ENCODE measurements at regions of chr22 and their contacts with region 1.

Region 1: DNA sequence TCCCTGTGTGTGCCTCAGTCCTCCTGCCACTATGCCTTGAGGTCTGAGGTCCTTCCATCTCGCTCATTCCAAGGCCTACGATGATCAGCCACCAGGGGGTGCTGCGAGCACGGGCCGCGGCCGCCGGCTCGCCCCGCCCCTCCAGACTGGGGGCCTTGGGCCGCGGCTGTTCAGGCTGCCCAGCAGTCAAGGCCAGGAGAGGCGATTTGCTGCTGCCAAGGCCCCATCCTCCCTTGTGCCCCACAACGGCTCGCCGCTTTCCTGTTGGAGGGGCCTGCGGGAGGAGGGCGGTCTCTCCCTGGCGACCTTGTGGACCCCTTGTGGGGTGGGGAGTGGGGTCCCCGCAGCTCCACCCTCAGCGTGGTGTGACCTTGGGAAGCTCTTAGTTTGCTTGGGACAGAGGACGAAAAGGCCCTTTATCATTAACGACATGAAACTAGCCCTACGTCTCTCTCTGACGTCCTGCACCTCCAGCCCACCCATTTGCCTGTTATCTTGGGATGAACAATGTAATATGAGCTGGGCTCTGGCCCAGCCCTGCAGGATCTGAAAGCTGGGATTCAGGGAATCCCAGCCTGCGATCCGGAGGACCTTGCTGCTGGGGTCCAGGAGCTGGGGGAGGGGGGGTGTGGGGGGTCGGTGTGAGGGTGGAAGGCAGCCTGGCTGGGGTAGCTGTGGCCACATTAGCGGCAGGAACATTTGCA is 5.3 kb upstream of the GALR3 start:
- DNase-seq: peak; percentile 86
- ATAC-seq: peak; percentile 70
- H3K4me3 ChIP-seq: peak overlapping the region; percentile 29 to 63 (median 35); a peak in 4 of 6 replicates
- H3K27ac ChIP-seq: peak overlapping the region; percentile 72
- H3K4me1 ChIP-seq: peaks cover 50% of the 10 kb centered on the region
- H3K27me3 ChIP-seq: no peaks in the 10 kb centered on the region
- CTCF ChIP-seq: peak; percentile 100
- EP300 ChIP-seq: peak in 1 of 2 experiments; percentile 23; a peak in 1 of 4 replicates
- POLR2A ChIP-seq: peak in 1 of 2 experiments; percentile 63; a peak in 1 of 4 replicates
- RAD21 ChIP-seq: peak; percentile 98

Region 2: DNA sequence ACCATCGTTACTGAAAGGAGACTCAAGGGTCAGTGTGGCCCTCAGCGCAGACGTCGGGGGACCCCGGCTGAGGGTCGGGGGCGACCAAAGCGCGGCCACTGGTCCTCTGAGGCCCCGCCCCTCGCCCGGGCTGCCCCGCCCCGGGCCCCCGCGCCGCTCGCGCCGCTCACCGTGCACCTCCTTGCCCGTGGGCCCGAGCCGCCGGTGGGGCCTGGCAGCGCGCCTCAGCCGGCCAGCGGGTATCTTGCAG is 25.8 kb after region 1 on chr22:
- CTCF ChIA-PET with region 1: no interaction called
- POLR2A ChIA-PET with region 1: interaction called, 59 read pairs
- in situ Hi-C with region 1: no loop called
- intact Hi-C with region 1: no loop called
- DNase-seq: no peak
- ATAC-seq: peak; percentile 62
- H3K4me3 ChIP-seq: peak overlapping the region; percentile 84 to 91 (median 87)
- H3K27ac ChIP-seq: peak overlapping the region; percentile 85
- H3K4me1 ChIP-seq: peaks cover 41% of the 10 kb centered on the region
- H3K27me3 ChIP-seq: no peaks in the 10 kb centered on the region
- CTCF ChIP-seq: no peak
- EP300 ChIP-seq: no peak
- POLR2A ChIP-seq: no peak; a peak in 1 of 4 replicates
- RAD21 ChIP-seq: no peak

Region 3: DNA sequence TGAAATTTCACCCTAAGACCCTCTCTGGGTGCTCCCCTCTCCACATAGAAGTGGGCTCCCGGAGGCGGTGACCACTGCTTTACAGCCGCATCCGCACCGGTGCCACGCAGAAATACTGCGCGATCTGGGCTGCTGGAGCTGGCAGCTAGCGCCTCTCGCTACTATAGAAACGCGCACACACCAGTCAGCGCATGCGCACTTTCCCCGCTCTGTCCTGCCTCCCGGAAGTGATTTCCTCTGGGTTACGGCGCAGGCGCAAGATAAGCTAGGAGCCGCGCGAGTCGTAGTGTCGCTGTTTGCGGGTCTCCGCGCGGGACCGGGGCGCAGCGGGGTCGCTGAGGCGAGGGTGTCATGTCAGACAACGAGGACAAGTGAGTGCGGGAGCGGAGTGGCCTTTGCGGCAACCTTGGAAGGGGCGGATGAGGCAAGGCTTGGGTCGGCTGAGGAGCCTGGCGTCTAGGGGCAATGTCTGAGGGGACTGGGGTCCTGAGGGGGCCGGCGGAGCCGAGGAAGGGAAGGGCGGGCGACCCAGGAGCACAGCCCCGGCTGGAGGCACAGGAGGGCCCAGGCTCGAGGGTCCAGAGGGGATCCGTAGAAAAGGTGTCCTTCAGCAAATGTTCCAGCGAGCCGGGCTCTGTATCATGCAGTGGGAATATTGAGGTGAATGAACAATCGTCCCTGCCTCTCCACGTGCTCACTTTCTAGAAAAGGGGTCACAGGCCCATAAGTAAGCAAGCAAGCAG is 135.8 kb after region 1 on chr22 and contains the starts of genes C22orf23 and POLR2F:
- CTCF ChIA-PET with region 1: no interaction called
- POLR2A ChIA-PET with region 1: interaction called, 10 read pairs
- in situ Hi-C with region 1: no loop called
- intact Hi-C with region 1: no loop called
- DNase-seq: peak; percentile 92
- ATAC-seq: peak; percentile 89
- H3K4me3 ChIP-seq: peak within 1 kb of the TSS; percentile 75 to 98 (median 91)
- H3K27ac ChIP-seq: peak within 1 kb of the TSS; percentile 49
- H3K4me1 ChIP-seq: peaks cover 53% of the 10 kb centered on the region
- H3K27me3 ChIP-seq: no peaks in the 10 kb centered on the region; a peak in 1 of 5 replicates
- CTCF ChIP-seq: peak; percentile 43
- EP300 ChIP-seq: no peak
- POLR2A ChIP-seq: peak; percentile 52 to 89; a peak in 3 of 4 replicates
- RAD21 ChIP-seq: no peak
- total RNA-seq, gene C22orf23: 0.24 and 0.32 TPM in 2 replicates
- total RNA-seq, gene POLR2F: 135 and 147 TPM in 2 replicates

Region 4: DNA sequence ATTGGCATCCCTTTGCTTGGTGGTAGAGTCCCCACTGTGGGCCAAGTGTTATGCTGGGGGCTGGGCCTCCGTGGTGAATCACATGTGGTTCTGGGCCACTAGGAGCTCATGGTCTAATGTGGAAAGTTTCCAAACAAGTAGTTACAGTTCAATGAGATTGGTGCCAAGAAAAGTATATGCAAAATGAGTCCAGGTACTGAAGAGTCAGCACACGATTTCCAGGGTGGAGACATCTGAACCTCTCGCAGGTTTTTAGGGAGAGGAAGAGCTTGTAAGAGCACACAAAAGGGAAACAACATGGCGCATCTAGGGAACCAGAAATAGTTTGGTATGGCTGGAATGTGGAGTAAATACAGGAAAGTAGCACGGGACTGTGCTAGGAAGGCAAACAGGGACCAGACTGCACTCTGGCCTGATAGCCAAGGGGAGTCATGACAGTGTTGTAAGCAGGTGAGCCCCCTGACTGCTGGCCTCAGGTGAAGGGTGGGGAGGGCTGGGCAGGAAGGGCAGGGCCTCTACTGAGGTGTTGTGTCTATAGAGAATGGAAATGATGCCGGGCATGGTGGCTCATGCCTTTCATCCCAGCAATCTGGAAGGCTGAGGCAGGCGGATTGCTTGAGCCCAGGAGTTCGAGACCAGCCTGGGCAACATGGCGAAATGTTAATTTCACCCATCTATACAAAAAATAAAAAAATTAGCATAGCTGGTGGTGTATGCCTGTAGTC is 148.2 kb after region 1 on chr22:
- CTCF ChIA-PET with region 1: interaction called, 4 read pairs
- POLR2A ChIA-PET with region 1: interaction called, 8 read pairs
- in situ Hi-C with region 1: no loop called
- intact Hi-C with region 1: loop called (anchors 1 kb)
- DNase-seq: peak; percentile 77
- ATAC-seq: peak; percentile 65
- H3K4me3 ChIP-seq: no peak overlapping the region
- H3K27ac ChIP-seq: peak overlapping the region; percentile 70
- H3K4me1 ChIP-seq: peaks cover 63% of the 10 kb centered on the region
- H3K27me3 ChIP-seq: no peaks in the 10 kb centered on the region
- CTCF ChIP-seq: no peak
- EP300 ChIP-seq: peak in 1 of 2 experiments; percentile 35; a peak in 1 of 4 replicates
- POLR2A ChIP-seq: no peak
- RAD21 ChIP-seq: no peak

Measured in HepG2 (cell line).